HEK293 (cell line): ENCODE measurements at regions of chr19 and their contacts with region 1.

Region 1: DNA sequence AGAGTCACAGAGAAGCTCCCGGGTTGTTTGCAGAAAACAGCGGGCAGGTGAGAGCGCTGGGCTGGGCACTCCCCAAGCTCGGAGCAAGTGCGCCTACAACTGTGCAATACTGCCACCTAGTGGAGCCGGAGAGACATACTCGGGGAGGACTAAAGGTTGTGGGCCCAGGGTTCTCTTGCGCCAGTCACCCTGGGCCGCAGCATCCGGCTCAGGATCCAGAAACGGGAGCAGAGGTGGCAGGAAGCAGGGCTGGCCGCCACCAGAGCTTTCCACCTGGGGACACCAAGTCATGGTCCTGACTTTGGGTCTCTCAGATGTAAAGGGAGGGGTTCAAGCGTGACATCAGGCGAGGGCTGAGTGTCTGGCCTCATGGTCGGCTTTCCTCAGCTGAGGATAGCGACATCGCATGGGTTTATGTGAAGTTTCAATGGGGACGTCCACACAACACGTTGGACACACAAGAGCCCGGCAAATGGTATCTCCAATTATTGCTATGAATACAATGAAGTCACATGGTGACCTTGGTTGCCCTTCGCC is 11.2 kb upstream of the KLK4 start:
- H3K4me3 ChIP-seq: no peak overlapping the region
- H3K27ac ChIP-seq: no peak overlapping the region
- H3K4me1 ChIP-seq: peaks cover 3% of the 10 kb centered on the region
- CTCF ChIP-seq: peak; percentile 84

Region 2: DNA sequence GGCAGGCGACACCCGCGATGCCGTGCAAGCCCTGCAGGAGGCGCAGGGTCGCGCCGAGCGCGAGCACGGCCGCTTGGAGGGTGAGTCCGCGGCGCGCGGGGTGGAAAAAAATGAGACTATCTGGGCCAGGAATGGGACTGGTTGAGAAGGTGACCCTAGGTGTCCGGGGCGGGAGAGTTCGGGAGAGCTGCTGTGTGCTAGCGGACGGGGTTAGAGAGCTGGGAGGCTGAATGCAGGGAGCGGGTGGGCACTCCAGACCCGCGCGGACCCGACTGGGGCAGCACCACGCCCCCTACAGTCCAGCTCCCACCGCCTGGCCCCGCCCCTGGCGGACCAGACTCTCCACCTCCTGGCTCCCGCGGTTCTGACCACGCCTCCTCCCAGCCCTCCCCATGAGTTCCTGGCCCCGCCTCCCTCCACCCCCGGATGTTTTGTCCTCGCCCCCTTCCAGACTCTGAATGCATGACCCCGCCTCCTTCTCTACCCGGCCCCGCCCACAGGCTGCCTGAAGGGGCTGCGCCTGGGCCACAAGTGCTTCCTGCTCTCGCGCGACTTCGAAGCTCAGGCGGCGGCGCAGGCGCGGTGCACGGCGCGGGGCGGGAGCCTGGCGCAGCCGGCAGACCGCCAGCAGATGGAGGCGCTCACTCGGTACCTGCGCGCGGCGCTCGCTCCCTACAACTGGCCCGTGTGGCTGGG is 197.7 kb before region 1 on chr19:
- CTCF ChIA-PET with region 1: interaction called, 13 read pairs
- POLR2A ChIA-PET with region 1: interaction called, 3 read pairs
- H3K4me3 ChIP-seq: peak overlapping the region; percentile 78
- H3K27ac ChIP-seq: peak overlapping the region; percentile 77
- H3K4me1 ChIP-seq: peaks cover 7% of the 10 kb centered on the region; the same call in 1 of the 2 replicates
- CTCF ChIP-seq: peak; percentile 100

Region 3: GRCh38 chr19:50804420-50805272 is 117.7 kb before region 1 on chr19:
- CTCF ChIA-PET with region 1: interaction called, 52 read pairs
- POLR2A ChIA-PET with region 1: interaction called, 21 read pairs
- H3K4me3 ChIP-seq: peak overlapping the region; percentile 79
- H3K27ac ChIP-seq: peak overlapping the region; percentile 99
- H3K4me1 ChIP-seq: peaks cover 11% of the 10 kb centered on the region
- CTCF ChIP-seq: no peak

Region 4: GRCh38 chr19:50909240-50910070 is 12.9 kb before region 1 on chr19:
- CTCF ChIA-PET with region 1: interaction called, 50 read pairs
- POLR2A ChIA-PET with region 1: interaction called, 3 read pairs
- H3K4me3 ChIP-seq: peak overlapping the region; percentile 18
- H3K27ac ChIP-seq: no peak overlapping the region
- H3K4me1 ChIP-seq: peaks cover 3% of the 10 kb centered on the region
- CTCF ChIP-seq: no peak

Region 5: GRCh38 chr19:51016798-51017683 is 94.7 kb after region 1 on chr19:
- CTCF ChIA-PET with region 1: interaction called, 14 read pairs
- POLR2A ChIA-PET with region 1: no interaction called
- H3K4me3 ChIP-seq: peak overlapping the region; percentile 48
- H3K27ac ChIP-seq: no peak overlapping the region
- H3K4me1 ChIP-seq: no peaks in the 10 kb centered on the region; the same call in 1 of the 2 replicates
- CTCF ChIP-seq: peak; percentile 96